CD14-positive monocyte (primary cell): ENCODE measurements at regions of chr7 and their contacts with region 1.

Region 1: GRCh38 chr7:23055582-23056178 is 41.8 kb upstream of the HYCC1 start:
- DNase-seq: peak; percentile 62 to 81 (median 70)
- H3K4me3 ChIP-seq: no peak overlapping the region
- H3K4me3 Mint-ChIP-seq: no peak overlapping the region
- H3K27ac ChIP-seq: no peak overlapping the region
- H3K27ac Mint-ChIP-seq: no peak overlapping the region
- H3K4me1 ChIP-seq: no peaks in the 10 kb centered on the region
- H3K4me1 Mint-ChIP-seq: peaks cover 5% of the 10 kb centered on the region
- H3K27me3 ChIP-seq: no peaks in the 10 kb centered on the region
- H3K27me3 Mint-ChIP-seq: peaks cover 0 to 5% (median 1%) of the 10 kb centered on the region in 3 donors
- CTCF ChIP-seq: peak; percentile 94

Region 2: DNA sequence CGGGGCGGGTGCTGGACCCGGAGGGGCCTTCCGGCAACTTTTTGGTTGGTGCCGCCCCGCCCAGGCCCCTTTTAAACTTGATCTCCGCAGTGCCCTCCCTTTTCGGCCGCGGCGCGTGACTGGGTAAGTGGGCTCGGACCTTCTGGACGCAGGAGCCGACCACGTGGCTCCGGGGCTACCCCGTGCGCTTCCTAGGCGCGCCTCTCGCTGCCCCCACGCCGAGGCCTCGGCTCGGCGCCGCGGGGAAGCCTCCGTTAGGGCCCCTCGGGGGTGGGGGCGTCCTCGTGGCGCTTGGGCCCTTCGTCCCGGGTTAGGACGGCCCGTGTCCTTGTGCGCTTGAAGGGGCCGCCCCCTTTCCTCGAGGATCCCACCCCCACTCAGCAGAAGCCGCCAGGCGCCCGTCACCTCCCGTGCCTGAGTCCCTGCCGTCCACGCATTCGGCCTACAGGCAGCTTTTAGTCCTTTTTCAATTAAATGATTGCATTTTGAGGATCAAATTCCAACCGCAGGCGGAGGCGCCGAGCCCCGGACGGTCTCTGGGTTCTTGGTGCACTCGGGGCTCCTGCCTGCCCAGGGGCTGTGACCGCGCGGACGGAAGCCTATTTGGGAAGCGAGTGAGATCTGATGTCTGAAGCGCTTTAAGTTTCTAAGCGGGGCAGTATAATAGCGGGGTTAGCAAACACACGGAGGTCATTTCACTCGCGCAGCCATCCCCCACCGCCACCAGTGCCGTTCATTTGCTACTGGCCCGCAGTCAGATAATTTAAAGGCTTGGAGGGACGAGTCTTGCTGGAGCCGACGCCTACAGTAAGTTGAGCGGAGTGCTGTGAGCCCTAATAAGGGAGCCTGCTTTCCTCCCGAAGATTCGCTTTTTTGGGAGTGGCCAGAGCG is 201.3 kb before region 1 on chr7:
- intact Hi-C with region 1: loop called (anchors 5 to 10 kb)
- DNase-seq: peak; percentile 34 to 69 (median 55)
- H3K4me3 ChIP-seq: peak overlapping the region; percentile 63 to 92 (median 65)
- H3K4me3 Mint-ChIP-seq: peak overlapping the region; percentile 96
- H3K27ac ChIP-seq: peak overlapping the region in 1 of 2 donors; percentile 74
- H3K27ac Mint-ChIP-seq: peak overlapping the region; percentile 68 to 87 (median 84)
- H3K4me1 ChIP-seq: peaks cover 9 to 17% of the 10 kb centered on the region in 2 donors
- H3K4me1 Mint-ChIP-seq: peaks cover 16% of the 10 kb centered on the region
- H3K27me3 ChIP-seq: no peaks in the 10 kb centered on the region
- H3K27me3 Mint-ChIP-seq: peaks cover 1 to 5% (median 2%) of the 10 kb centered on the region in 3 donors
- CTCF ChIP-seq: peak; percentile 98